Panc1 (cell line): ENCODE measurements at regions of chr10 and their contacts with region 1.

Region 1: GRCh38 chr10:104045151-104046089 is 40.3 kb downstream of the COL17A1 start:
- DNase-seq: peak; percentile 50
- ATAC-seq: peak; percentile 92
- H3K4me3 ChIP-seq: no peak overlapping the region
- H3K27ac ChIP-seq: no peak overlapping the region
- H3K4me1 ChIP-seq: peaks cover 5% of the 10 kb centered on the region; the same call in 1 of the 2 replicates
- H3K27me3 ChIP-seq: peaks cover 4% of the 10 kb centered on the region
- CTCF ChIP-seq: peak; percentile 89

Region 2: DNA sequence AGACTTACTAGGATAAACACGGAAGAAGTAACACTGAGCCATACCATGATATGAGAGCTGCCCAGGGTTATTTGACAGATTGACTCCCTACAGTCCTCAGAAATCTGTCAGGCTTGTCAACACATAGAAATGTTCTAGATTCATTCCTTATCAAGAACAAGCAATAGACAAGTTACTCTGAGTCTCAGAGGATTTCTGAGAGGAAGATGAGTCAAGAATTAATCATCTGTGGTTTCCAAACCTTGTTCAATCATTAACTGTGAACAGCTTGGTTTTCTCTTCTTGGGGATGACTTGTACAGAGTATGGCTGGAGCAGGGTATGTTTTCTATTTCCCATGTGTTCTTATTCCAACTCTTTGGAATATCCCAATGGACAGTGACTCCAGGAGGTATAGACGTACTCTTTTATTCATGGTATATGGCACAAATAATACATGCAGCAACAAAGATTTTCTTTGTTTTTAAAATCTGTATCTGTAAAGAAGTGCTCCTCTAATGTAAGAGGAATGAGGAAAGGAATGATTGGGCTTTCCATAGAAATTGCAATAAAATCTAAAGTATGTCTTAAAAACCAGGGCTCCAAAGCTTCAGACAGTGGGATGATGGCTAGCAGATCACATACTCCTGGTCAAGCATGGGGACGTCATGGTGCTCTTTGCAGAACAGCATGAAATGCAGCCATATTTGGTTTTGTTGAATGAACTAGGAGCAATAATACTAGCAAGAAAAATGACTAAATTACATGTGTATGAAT is 64.7 kb after region 1 on chr10:
- CTCF ChIA-PET with region 1: no interaction called
- POLR2A ChIA-PET with region 1: no interaction called
- in situ Hi-C with region 1: no loop called
- intact Hi-C with region 1: no loop called
- DNase-seq: no peak
- ATAC-seq: peak; percentile 82
- H3K4me3 ChIP-seq: no peak overlapping the region
- H3K27ac ChIP-seq: no peak overlapping the region
- H3K4me1 ChIP-seq: no peaks in the 10 kb centered on the region
- H3K27me3 ChIP-seq: no peaks in the 10 kb centered on the region
- CTCF ChIP-seq: no peak

Region 3: DNA sequence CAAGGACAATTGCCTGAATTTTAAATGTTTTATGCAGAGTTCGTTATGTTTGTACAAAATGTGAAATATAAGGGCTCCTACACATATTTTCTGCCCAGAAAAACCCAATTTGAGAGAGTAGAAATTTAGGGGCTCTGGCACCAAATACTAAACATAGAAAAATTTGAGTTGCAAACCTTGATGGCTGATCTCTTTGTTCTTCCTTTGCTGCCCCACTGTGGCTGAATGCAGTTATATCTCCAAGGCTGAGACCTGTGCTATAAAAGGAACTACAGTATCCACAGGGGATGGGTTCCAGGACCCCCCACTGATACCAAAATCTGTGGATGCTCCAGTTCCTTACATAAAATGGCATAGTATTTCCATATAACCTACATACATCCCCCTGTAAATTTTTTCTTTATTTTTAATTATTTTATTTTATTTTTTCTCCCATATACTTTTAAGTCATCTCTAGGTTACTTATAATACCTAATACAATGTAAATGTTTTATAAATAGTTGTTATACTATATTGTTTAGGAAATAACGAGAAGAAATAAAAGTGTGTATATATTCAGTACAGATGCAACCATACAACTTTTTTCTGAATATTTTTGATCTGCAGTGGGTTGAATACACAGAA is 164.3 kb after region 1 on chr10:
- CTCF ChIA-PET with region 1: no interaction called
- POLR2A ChIA-PET with region 1: no interaction called
- in situ Hi-C with region 1: no loop called
- intact Hi-C with region 1: loop called (anchors 1 kb)
- DNase-seq: no peak
- ATAC-seq: peak; percentile 85
- H3K4me3 ChIP-seq: no peak overlapping the region
- H3K27ac ChIP-seq: no peak overlapping the region
- H3K4me1 ChIP-seq: no peaks in the 10 kb centered on the region
- H3K27me3 ChIP-seq: peaks cover 19% of the 10 kb centered on the region
- CTCF ChIP-seq: peak; percentile 84

Region 4: GRCh38 chr10:104368381-104368780 is 323.0 kb after region 1 on chr10:
- CTCF ChIA-PET with region 1: no interaction called
- POLR2A ChIA-PET with region 1: no interaction called
- in situ Hi-C with region 1: no loop called
- intact Hi-C with region 1: no loop called
- DNase-seq: no peak
- ATAC-seq: no peak
- H3K4me3 ChIP-seq: no peak overlapping the region
- H3K27ac ChIP-seq: no peak overlapping the region
- H3K4me1 ChIP-seq: no peaks in the 10 kb centered on the region
- H3K27me3 ChIP-seq: no peaks in the 10 kb centered on the region
- CTCF ChIP-seq: no peak